ENCODE measurements at regions of chr13 and their contacts with region 1.

Region 1: GRCh38 chr13:23375001-23375971 is 58.2 kb downstream of the SACS start:
- DNase-seq: peak; percentile 86 to 96 (median 92)
- ATAC-seq: peak; percentile 95
- H3K4me3 ChIP-seq: peak overlapping the region; percentile 48
- H3K4me3 Mint-ChIP-seq: peak overlapping the region; percentile 71 to 82 (median 77)
- H3K27ac ChIP-seq: peak overlapping the region; percentile 75
- H3K27ac Mint-ChIP-seq: peak overlapping the region in 8 of 9 donors; percentile 44 to 94 (median 78)
- H3K4me1 ChIP-seq: peaks cover 21 to 26% of the 10 kb centered on the region in 2 donors
- H3K4me1 Mint-ChIP-seq: peaks cover 22 to 70% (median 67%) of the 10 kb centered on the region in 7 donors
- H3K27me3 ChIP-seq: no peaks in the 10 kb centered on the region
- H3K27me3 Mint-ChIP-seq: no peaks in the 10 kb centered on the region

Region 2: GRCh38 chr13:23321535-23322241 is 53.6 kb before region 1 on chr13:
- CTCF ChIA-PET with region 1: no interaction called
- POLR2A ChIA-PET with region 1: no interaction called
- intact Hi-C with region 1: loop called in 1 of 2 experiments (anchors 5 kb)
- DNase-seq: no peak
- ATAC-seq: peak; percentile 67
- H3K4me3 ChIP-seq: peak overlapping the region; percentile 18
- H3K4me3 Mint-ChIP-seq: peak overlapping the region in 3 of 10 donors; percentile 21 to 75 (median 71)
- H3K27ac ChIP-seq: no peak overlapping the region
- H3K27ac Mint-ChIP-seq: peak overlapping the region in 1 of 9 donors; percentile 55
- H3K4me1 ChIP-seq: peaks cover 0 to 5% of the 10 kb centered on the region in 2 donors
- H3K4me1 Mint-ChIP-seq: peaks cover 0 to 34% (median 0%) of the 10 kb centered on the region in 7 donors
- H3K27me3 ChIP-seq: no peaks in the 10 kb centered on the region
- H3K27me3 Mint-ChIP-seq: peaks cover 3 to 16% (median 13%) of the 10 kb centered on the region in 5 donors

Region 3: DNA sequence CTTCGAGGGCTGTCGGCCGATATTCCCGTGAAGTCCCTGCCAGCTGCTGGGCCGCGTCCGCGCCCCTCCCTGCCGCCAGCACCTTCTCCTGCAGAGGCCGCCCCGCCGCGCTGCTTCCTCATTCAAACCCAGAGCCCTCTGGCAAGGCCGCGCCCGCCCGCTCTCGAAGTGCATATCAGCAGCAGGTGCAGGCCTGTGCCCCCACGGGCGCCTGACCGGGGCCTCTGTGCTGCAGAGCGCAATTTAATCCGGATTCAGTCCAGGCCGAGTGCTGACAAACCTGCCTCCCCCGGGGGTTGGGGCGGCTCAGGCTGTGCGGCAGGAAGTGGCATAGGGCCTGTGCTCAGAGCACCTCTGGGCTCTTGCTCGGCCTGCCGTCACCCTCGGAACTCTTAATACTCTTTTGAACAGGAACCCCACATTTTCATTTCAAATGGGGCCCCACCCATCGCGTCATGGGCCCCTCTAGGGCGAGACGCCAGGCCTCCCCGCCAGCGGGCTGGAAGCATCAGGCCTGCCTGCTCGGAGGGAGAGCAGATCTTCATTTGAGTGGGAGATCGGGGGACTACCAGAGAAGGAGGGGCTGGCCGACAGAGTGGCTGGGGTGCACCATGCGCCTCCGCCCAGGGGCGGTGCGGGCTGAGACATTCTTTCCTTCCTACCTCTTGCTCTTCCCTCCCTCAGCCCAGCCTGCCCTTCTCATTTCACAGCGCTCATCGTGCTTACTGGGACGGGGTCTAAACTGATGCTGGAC is 320.6 kb after region 1 on chr13:
- CTCF ChIA-PET with region 1: no interaction called
- POLR2A ChIA-PET with region 1: no interaction called
- intact Hi-C with region 1: loop called in 1 of 2 experiments (anchors 1 kb)
- DNase-seq: peak; percentile 25 to 71 (median 68)
- ATAC-seq: peak; percentile 88
- H3K4me3 ChIP-seq: peak overlapping the region; percentile 49
- H3K4me3 Mint-ChIP-seq: peak overlapping the region; percentile 73 to 86 (median 81)
- H3K27ac ChIP-seq: peak overlapping the region; percentile 62
- H3K27ac Mint-ChIP-seq: peak overlapping the region; percentile 87 to 98 (median 95)
- H3K4me1 ChIP-seq: peaks cover 0 to 9% of the 10 kb centered on the region in 2 donors
- H3K4me1 Mint-ChIP-seq: peaks cover 6 to 31% (median 24%) of the 10 kb centered on the region in 7 donors
- H3K27me3 ChIP-seq: no peaks in the 10 kb centered on the region
- H3K27me3 Mint-ChIP-seq: peaks cover 0 to 7% (median 0%) of the 10 kb centered on the region in 5 donors

Region 4: GRCh38 chr13:24160454-24161009 is 785.2 kb after region 1 on chr13 and contains the start of gene SPATA13:
- CTCF ChIA-PET with region 1: no interaction called
- POLR2A ChIA-PET with region 1: no interaction called
- intact Hi-C with region 1: loop called (anchors 1 kb)
- DNase-seq: peak; percentile 84 to 95 (median 93)
- ATAC-seq: peak; percentile 99
- H3K4me3 ChIP-seq: peak within 1 kb of the TSS; percentile 80
- H3K4me3 Mint-ChIP-seq: peak within 1 kb of the TSS; percentile 79 to 94 (median 88)
- H3K27ac ChIP-seq: peak within 1 kb of the TSS; percentile 62
- H3K27ac Mint-ChIP-seq: peak within 1 kb of the TSS in 8 of 9 donors; percentile 24 to 82 (median 65)
- H3K4me1 ChIP-seq: peaks cover 3 to 9% of the 10 kb centered on the region in 2 donors
- H3K4me1 Mint-ChIP-seq: peaks cover 9 to 19% (median 13%) of the 10 kb centered on the region in 7 donors
- H3K27me3 ChIP-seq: no peaks in the 10 kb centered on the region
- H3K27me3 Mint-ChIP-seq: peaks cover 5 to 23% (median 9%) of the 10 kb centered on the region in 5 donors
- total RNA-seq, gene SPATA13: 62.2 to 104 (median 101) TPM

Region 5: DNA sequence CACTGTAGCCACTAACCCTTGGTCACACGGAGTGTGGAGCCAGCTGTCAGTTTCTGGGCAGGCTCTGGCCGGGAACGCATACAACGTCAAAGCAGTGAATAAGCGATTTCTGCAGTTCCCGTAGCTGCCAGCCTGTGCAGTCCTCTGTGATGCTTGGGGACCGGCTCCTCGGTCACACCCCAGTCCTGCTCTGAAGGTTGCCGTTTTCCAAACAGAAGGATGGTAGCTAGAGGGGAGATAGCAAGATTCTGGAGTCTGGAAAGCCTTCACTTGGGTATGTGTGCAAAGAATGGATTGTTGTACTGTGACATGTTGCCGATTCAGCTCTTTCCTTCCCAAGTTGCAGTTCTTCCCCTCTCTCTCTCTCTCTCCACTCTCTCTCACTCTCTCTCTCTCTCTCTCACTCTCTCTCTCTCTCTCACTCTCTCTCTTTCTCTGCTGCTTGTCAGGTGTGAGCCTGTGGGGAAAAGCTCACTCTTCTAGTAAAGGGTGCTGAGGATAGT is 895.4 kb after region 1 on chr13:
- CTCF ChIA-PET with region 1: no interaction called
- POLR2A ChIA-PET with region 1: no interaction called
- intact Hi-C with region 1: loop called in 1 of 2 experiments (anchors 5 kb)
- DNase-seq: peak in 8 of 9 donors; percentile 57 to 72 (median 66)
- ATAC-seq: peak; percentile 56
- H3K4me3 ChIP-seq: peak overlapping the region; percentile 56
- H3K4me3 Mint-ChIP-seq: peak overlapping the region; percentile 87 to 99 (median 92)
- H3K27ac ChIP-seq: peak overlapping the region; percentile 94
- H3K27ac Mint-ChIP-seq: peak overlapping the region; percentile 97 to 100 (median 99)
- H3K4me1 ChIP-seq: peaks cover 82 to 83% of the 10 kb centered on the region in 2 donors
- H3K4me1 Mint-ChIP-seq: peaks cover 66 to 97% (median 93%) of the 10 kb centered on the region in 7 donors
- H3K27me3 ChIP-seq: no peaks in the 10 kb centered on the region
- H3K27me3 Mint-ChIP-seq: peaks cover 0 to 3% (median 0%) of the 10 kb centered on the region in 5 donors

Region 6: GRCh38 chr13:25286969-25287961 is 1912.0 kb after region 1 on chr13 and contains the start of gene MTMR6:
- CTCF ChIA-PET with region 1: no interaction called
- POLR2A ChIA-PET with region 1: no interaction called
- intact Hi-C with region 1: loop called in 1 of 2 experiments (anchors 5 kb)
- DNase-seq: peak; percentile 90 to 98 (median 93)
- ATAC-seq: peak; percentile 96
- H3K4me3 ChIP-seq: peak within 1 kb of the TSS; percentile 85
- H3K4me3 Mint-ChIP-seq: peak within 1 kb of the TSS; percentile 94 to 100 (median 96)
- H3K27ac ChIP-seq: peak within 1 kb of the TSS; percentile 100
- H3K27ac Mint-ChIP-seq: peak within 1 kb of the TSS; percentile 92 to 99 (median 97)
- H3K4me1 ChIP-seq: peaks cover 12 to 24% of the 10 kb centered on the region in 2 donors
- H3K4me1 Mint-ChIP-seq: peaks cover 23 to 58% (median 50%) of the 10 kb centered on the region in 7 donors
- H3K27me3 ChIP-seq: peaks cover 0 to 3% of the 10 kb centered on the region in 2 donors
- H3K27me3 Mint-ChIP-seq: peaks cover 0 to 17% (median 10%) of the 10 kb centered on the region in 5 donors
- total RNA-seq, gene MTMR6: 16.0 to 23.2 (median 18.5) TPM

Measured in naive thymus-derived CD4-positive, alpha-beta T cell (primary cell).